ENCODE measurements at regions of chrX and their contacts with region 1.

Region 1: DNA sequence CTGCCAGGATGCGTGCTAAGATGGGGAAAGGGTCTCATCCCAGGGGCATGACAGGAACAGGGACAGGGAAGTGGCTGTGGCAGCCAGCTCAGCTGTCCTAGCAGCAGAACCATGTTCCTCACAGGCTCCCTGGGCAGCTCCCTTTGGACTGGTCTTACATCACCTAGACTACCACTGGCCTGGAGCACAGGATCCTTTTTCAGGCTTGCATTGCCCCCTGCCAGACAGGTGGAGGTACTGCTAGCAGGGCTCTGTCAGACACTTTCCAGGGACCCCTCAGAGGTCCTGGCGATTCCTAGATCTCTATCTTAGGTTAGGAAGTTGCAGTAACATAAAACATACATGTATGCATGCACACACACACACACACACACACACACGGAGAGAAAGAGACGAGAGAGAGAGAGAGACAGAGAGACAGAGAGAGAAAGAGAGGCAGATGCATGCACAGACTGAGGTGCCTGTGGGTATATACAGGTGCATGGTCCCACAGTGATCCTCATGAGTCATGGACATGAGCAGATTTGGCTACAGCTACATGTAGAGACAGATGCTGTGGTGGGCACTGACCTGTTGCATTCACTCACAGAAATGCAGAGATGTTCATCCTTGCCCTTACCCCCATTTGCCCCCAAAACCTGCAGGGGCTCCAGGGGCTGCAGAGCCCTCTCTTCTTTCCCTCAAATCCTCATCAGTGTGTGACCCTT is 63.6 kb downstream of the STARD8 start:
- DNase-seq: peak; percentile 73
- H3K4me3 ChIP-seq: no peak overlapping the region
- H3K27ac ChIP-seq: no peak overlapping the region
- H3K4me1 ChIP-seq: no peaks in the 10 kb centered on the region
- H3K27me3 ChIP-seq: no peaks in the 10 kb centered on the region; the same call in 1 of the 2 replicates
- CTCF ChIP-seq: peak; percentile 68
- EP300 ChIP-seq: no peak
- RAD21 ChIP-seq: peak; percentile 84

Region 2: GRCh38 chrX:68196939-68197791 is 513.9 kb before region 1 on chrX:
- CTCF ChIA-PET with region 1: interaction called, 10 read pairs
- POLR2A ChIA-PET with region 1: no interaction called
- DNase-seq: peak; percentile 58
- H3K4me3 ChIP-seq: no peak overlapping the region
- H3K27ac ChIP-seq: no peak overlapping the region
- H3K4me1 ChIP-seq: no peaks in the 10 kb centered on the region
- H3K27me3 ChIP-seq: no peaks in the 10 kb centered on the region
- CTCF ChIP-seq: peak; percentile 88
- EP300 ChIP-seq: no peak
- RAD21 ChIP-seq: peak; percentile 92

Region 3: GRCh38 chrX:68511255-68511654 is 199.8 kb before region 1 on chrX:
- CTCF ChIA-PET with region 1: interaction called, 13 read pairs
- POLR2A ChIA-PET with region 1: no interaction called
- DNase-seq: peak; percentile 56
- H3K4me3 ChIP-seq: no peak overlapping the region
- H3K27ac ChIP-seq: no peak overlapping the region
- H3K4me1 ChIP-seq: no peaks in the 10 kb centered on the region
- H3K27me3 ChIP-seq: no peaks in the 10 kb centered on the region
- CTCF ChIP-seq: peak; percentile 93
- EP300 ChIP-seq: no peak
- RAD21 ChIP-seq: peak; percentile 77

Region 4: GRCh38 chrX:68599251-68600152 is 111.5 kb before region 1 on chrX:
- CTCF ChIA-PET with region 1: interaction called, 28 read pairs
- POLR2A ChIA-PET with region 1: no interaction called
- DNase-seq: peak; percentile 15
- H3K4me3 ChIP-seq: no peak overlapping the region
- H3K27ac ChIP-seq: no peak overlapping the region
- H3K4me1 ChIP-seq: no peaks in the 10 kb centered on the region
- H3K27me3 ChIP-seq: no peaks in the 10 kb centered on the region
- CTCF ChIP-seq: peak; percentile 76
- EP300 ChIP-seq: no peak
- RAD21 ChIP-seq: peak; percentile 59

Region 5: GRCh38 chrX:68693481-68694434 is 17.3 kb before region 1 on chrX:
- CTCF ChIA-PET with region 1: interaction called, 18 read pairs
- POLR2A ChIA-PET with region 1: no interaction called
- DNase-seq: peak; percentile 90
- H3K4me3 ChIP-seq: peak overlapping the region; percentile 53 to 62
- H3K27ac ChIP-seq: peak overlapping the region in 1 of 2 experiments; percentile 40; a peak in 1 of 4 replicates
- H3K4me1 ChIP-seq: no peaks in the 10 kb centered on the region; a peak in 1 of 4 replicates
- H3K27me3 ChIP-seq: peaks cover 7% of the 10 kb centered on the region; the same call in 1 of the 2 replicates
- CTCF ChIP-seq: no peak
- EP300 ChIP-seq: no peak
- RAD21 ChIP-seq: no peak

Region 6: GRCh38 chrX:68699960-68700746 is 10.9 kb before region 1 on chrX:
- CTCF ChIA-PET with region 1: interaction called, 18 read pairs
- POLR2A ChIA-PET with region 1: no interaction called
- DNase-seq: no peak
- H3K4me3 ChIP-seq: no peak overlapping the region
- H3K27ac ChIP-seq: peak overlapping the region in 1 of 2 experiments; percentile 62; a peak in 2 of 4 replicates
- H3K4me1 ChIP-seq: no peaks in the 10 kb centered on the region
- H3K27me3 ChIP-seq: no peaks in the 10 kb centered on the region
- CTCF ChIP-seq: no peak
- EP300 ChIP-seq: peak in 1 of 2 experiments; percentile 41; a peak in 1 of 4 replicates
- RAD21 ChIP-seq: no peak

Region 7: DNA sequence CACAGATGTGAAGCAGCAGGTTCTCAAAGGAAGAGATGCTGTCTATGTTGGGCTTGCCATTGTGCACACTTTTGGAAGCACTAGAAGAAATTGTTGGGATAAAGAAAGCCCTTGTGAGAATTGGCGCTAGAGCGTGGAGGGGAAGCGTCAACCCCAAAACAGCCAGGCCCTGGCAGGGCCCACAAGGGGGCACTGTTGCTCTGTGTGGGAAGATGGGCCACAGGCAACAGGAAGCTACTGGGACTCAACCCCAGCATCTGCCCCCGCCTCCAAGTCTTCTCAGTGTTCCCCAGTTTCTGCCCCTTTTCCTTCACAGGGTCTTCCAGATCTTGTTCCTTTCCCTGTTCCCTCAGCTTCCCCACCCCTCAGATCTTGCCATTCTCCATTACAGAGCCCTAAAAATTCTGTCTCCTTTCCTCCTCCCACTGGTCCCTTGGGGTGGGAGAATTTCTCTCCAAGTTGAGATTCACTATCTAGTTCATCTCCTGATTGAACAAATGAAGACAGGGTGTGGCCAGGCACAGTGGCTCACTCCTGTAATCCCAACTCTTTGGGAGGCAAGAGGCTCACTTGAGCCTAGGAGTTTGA is 22.0 kb after region 1 on chrX:
- CTCF ChIA-PET with region 1: interaction called, 10 read pairs
- POLR2A ChIA-PET with region 1: no interaction called
- DNase-seq: peak; percentile 69
- H3K4me3 ChIP-seq: no peak overlapping the region
- H3K27ac ChIP-seq: no peak overlapping the region
- H3K4me1 ChIP-seq: no peaks in the 10 kb centered on the region
- H3K27me3 ChIP-seq: peaks cover 11% of the 10 kb centered on the region; the same call in 1 of the 2 replicates
- CTCF ChIP-seq: peak; percentile 68
- EP300 ChIP-seq: no peak
- RAD21 ChIP-seq: peak; percentile 68

Measured in SK-N-SH (cell line).